ENCODE measurements at regions of chr11 and their contacts with region 1.

Region 1: GRCh38 chr11:4072668-4073285 is 21.8 kb upstream of the RRM1 start:
- DNase-seq: peak; percentile 82
- ATAC-seq: peak; percentile 73
- H3K4me3 ChIP-seq: no peak overlapping the region
- H3K4me3 Mint-ChIP-seq: no peak overlapping the region
- H3K27ac ChIP-seq: peak overlapping the region in 1 of 2 donors; percentile 31
- H3K27ac Mint-ChIP-seq: peak overlapping the region; percentile 5
- H3K4me1 ChIP-seq: peaks cover 4 to 14% of the 10 kb centered on the region in 2 donors
- H3K4me1 Mint-ChIP-seq: peaks cover 20% of the 10 kb centered on the region
- H3K27me3 ChIP-seq: no peaks in the 10 kb centered on the region
- H3K27me3 Mint-ChIP-seq: no peaks in the 10 kb centered on the region
- CTCF ChIP-seq: peak; percentile 95

Region 2: DNA sequence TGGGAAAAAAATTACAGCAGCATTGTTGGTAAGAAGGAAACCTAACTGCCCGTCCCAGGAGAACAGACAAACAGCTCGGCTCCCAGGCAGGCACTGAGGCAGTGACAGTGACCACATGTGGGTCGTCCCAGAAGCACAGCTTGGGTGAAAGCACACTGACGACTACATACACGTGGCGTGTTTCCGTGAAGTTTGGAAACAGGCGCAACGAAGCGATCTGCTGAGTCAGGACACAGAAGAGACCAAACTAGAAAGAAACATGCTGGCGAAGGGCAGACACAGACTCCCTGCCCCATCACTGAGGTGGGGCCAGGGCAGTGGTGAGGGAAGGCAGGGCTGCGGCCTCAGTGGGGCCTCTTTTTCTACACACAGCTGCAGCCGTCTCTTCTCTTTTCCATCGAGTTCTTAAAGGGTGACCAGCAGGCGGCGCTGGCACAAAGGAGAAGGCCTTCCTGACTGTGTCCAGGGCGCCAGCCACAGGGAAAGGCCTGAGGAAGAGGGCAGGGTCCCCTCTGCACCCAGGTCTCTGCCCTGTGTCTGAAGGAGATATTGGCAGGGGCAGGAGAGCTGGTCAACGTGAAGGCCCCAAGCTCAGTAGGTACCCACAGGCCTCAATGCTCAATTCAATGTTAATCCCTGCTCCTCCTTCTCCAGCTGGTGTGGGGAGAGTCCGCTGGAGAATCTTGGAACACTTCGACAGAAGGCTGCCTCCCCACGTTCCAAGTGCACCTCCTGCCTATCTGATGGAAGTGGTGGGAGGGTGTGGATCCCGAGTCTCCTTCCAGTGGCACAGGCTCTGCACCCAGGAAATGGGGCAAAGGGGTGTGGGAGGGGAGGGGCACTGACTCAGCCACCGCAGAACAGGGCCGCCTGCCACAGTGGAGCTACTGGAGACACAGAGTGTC is 1035.5 kb before region 1 on chr11:
- CTCF ChIA-PET with region 1: no interaction called
- POLR2A ChIA-PET with region 1: no interaction called
- intact Hi-C with region 1: no loop called
- DNase-seq: peak; percentile 51
- ATAC-seq: peak; percentile 34
- H3K4me3 ChIP-seq: no peak overlapping the region
- H3K4me3 Mint-ChIP-seq: peak overlapping the region; percentile 9
- H3K27ac ChIP-seq: peak overlapping the region in 1 of 2 donors; percentile 42
- H3K27ac Mint-ChIP-seq: peak overlapping the region; percentile 39
- H3K4me1 ChIP-seq: peaks cover 24 to 30% of the 10 kb centered on the region in 2 donors
- H3K4me1 Mint-ChIP-seq: peaks cover 26% of the 10 kb centered on the region
- H3K27me3 ChIP-seq: no peaks in the 10 kb centered on the region
- H3K27me3 Mint-ChIP-seq: no peaks in the 10 kb centered on the region
- CTCF ChIP-seq: peak; percentile 50

Region 3: DNA sequence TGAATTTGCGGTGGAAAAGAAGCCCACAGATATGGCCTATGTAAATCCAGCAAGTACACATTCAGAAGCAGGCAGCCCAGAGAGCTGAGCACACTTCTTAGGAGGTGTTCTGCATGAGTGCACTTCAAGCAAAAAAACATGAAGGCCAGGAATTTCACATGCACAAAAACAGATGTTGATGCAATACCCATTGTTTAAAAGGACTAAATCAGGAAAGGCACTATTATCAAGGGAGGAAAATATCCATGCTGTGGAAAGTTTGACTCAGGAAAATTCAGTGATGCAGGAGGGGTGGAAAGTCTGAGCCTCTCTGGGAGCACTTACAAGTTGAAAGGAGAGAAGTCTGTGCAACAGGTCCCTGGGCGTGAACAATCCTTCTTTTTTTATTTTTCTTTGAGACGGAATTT is 999.7 kb before region 1 on chr11:
- CTCF ChIA-PET with region 1: no interaction called
- POLR2A ChIA-PET with region 1: no interaction called
- intact Hi-C with region 1: no loop called
- DNase-seq: no peak
- ATAC-seq: no peak
- H3K4me3 ChIP-seq: no peak overlapping the region
- H3K4me3 Mint-ChIP-seq: no peak overlapping the region
- H3K27ac ChIP-seq: no peak overlapping the region
- H3K27ac Mint-ChIP-seq: no peak overlapping the region
- H3K4me1 ChIP-seq: no peaks in the 10 kb centered on the region
- H3K4me1 Mint-ChIP-seq: no peaks in the 10 kb centered on the region
- H3K27me3 ChIP-seq: no peaks in the 10 kb centered on the region
- H3K27me3 Mint-ChIP-seq: peaks cover 11% of the 10 kb centered on the region
- CTCF ChIP-seq: no peak

Region 4: DNA sequence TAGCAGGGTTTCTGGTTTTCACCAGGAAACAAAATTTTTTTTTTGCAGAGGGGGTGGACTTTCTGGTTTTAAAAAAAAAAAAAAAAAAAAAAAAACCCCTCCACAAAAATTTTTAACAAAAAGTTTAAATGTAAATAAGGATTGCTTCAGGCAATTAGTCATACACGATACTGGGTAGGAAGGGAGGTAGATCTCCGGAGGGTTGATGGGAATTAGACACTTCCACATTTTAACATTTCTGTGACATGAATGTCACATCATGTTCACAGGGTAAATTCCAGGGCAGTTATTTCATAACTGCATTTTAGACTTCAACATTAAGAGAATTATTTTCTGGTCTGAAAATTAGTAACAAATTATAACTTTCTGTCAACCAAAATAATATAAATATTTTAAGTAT is 291.4 kb before region 1 on chr11:
- CTCF ChIA-PET with region 1: interaction called, 18 read pairs
- POLR2A ChIA-PET with region 1: no interaction called
- intact Hi-C with region 1: loop called (anchors 10 kb)
- DNase-seq: no peak
- ATAC-seq: no peak
- H3K4me3 ChIP-seq: no peak overlapping the region
- H3K4me3 Mint-ChIP-seq: no peak overlapping the region
- H3K27ac ChIP-seq: peak overlapping the region in 1 of 2 donors; percentile 50
- H3K27ac Mint-ChIP-seq: peak overlapping the region; percentile 32
- H3K4me1 ChIP-seq: peaks cover 16 to 18% of the 10 kb centered on the region in 2 donors
- H3K4me1 Mint-ChIP-seq: peaks cover 36% of the 10 kb centered on the region
- H3K27me3 ChIP-seq: no peaks in the 10 kb centered on the region
- H3K27me3 Mint-ChIP-seq: no peaks in the 10 kb centered on the region
- CTCF ChIP-seq: no peak

Region 5: GRCh38 chr11:3817181-3817800 is 255.5 kb before region 1 on chr11:
- CTCF ChIA-PET with region 1: interaction called, 18 read pairs
- POLR2A ChIA-PET with region 1: no interaction called
- intact Hi-C with region 1: no loop called
- DNase-seq: no peak
- ATAC-seq: no peak
- H3K4me3 ChIP-seq: no peak overlapping the region
- H3K4me3 Mint-ChIP-seq: no peak overlapping the region
- H3K27ac ChIP-seq: no peak overlapping the region
- H3K27ac Mint-ChIP-seq: no peak overlapping the region
- H3K4me1 ChIP-seq: no peaks in the 10 kb centered on the region
- H3K4me1 Mint-ChIP-seq: no peaks in the 10 kb centered on the region
- H3K27me3 ChIP-seq: no peaks in the 10 kb centered on the region
- H3K27me3 Mint-ChIP-seq: no peaks in the 10 kb centered on the region
- CTCF ChIP-seq: no peak

Region 6: DNA sequence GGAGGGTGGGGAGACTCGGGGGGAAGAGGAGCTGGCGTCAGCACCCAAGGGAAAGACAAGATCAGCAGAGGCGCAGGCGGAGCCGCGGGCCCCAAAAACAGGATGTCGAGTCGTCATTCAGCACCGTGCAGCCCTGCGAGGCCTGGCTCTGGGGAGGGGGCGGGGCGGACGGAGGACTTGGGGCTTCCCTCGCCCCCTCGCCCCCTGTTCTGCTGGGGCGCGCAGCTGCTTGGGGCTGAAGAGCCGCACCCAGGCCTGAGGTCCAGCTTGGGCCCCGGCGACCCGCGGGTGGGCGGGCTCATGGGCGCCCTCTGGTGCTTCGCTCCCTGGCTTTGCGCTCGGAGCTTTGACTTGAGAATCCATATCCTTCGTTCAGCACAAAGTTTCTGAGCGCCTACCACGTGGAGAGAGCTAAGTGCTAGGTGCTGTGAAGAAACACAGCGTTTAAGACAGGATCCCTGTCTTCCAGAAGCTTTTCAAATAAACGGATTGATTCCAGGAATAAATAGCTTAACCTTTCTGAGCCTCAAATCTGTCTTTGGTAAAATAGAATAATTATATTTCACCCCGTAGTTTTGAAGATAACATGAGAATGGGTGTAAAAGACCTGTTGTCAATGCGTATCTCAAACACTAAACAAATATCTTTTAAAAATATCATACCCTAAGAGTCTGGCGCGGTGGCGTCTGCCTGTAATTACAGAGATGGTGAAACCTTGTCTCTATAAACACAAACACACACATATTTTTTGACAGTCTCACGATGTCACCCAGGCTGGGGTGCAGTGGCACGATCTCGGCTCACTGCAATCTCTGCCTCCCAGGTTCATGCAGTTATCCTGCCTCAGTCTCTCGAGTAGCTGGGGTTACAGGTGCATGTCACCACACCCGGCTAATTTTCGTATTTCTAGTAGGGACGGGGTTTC is 231.1 kb before region 1 on chr11:
- CTCF ChIA-PET with region 1: interaction called, 819 read pairs
- POLR2A ChIA-PET with region 1: interaction called, 4 read pairs
- intact Hi-C with region 1: loop called (anchors 2 kb)
- DNase-seq: peak; percentile 99
- ATAC-seq: no peak
- H3K4me3 ChIP-seq: peak overlapping the region; percentile 31 to 89 (median 85)
- H3K4me3 Mint-ChIP-seq: peak overlapping the region; percentile 84
- H3K27ac ChIP-seq: peak overlapping the region; percentile 95 to 98
- H3K27ac Mint-ChIP-seq: peak overlapping the region; percentile 98
- H3K4me1 ChIP-seq: peaks cover 39 to 44% of the 10 kb centered on the region in 2 donors
- H3K4me1 Mint-ChIP-seq: peaks cover 48% of the 10 kb centered on the region
- H3K27me3 ChIP-seq: no peaks in the 10 kb centered on the region
- H3K27me3 Mint-ChIP-seq: no peaks in the 10 kb centered on the region
- CTCF ChIP-seq: peak; percentile 81

Region 7: GRCh38 chr11:3873712-3874349 is 198.9 kb before region 1 on chr11:
- CTCF ChIA-PET with region 1: interaction called, 20 read pairs
- POLR2A ChIA-PET with region 1: no interaction called
- intact Hi-C with region 1: no loop called
- DNase-seq: no peak
- ATAC-seq: peak; percentile 70
- H3K4me3 ChIP-seq: no peak overlapping the region
- H3K4me3 Mint-ChIP-seq: peak overlapping the region; percentile 57
- H3K27ac ChIP-seq: peak overlapping the region; percentile 1 to 67
- H3K27ac Mint-ChIP-seq: peak overlapping the region; percentile 83
- H3K4me1 ChIP-seq: peaks cover 63 to 71% of the 10 kb centered on the region in 2 donors
- H3K4me1 Mint-ChIP-seq: peaks cover 84% of the 10 kb centered on the region
- H3K27me3 ChIP-seq: no peaks in the 10 kb centered on the region
- H3K27me3 Mint-ChIP-seq: no peaks in the 10 kb centered on the region
- CTCF ChIP-seq: no peak

Region 8: DNA sequence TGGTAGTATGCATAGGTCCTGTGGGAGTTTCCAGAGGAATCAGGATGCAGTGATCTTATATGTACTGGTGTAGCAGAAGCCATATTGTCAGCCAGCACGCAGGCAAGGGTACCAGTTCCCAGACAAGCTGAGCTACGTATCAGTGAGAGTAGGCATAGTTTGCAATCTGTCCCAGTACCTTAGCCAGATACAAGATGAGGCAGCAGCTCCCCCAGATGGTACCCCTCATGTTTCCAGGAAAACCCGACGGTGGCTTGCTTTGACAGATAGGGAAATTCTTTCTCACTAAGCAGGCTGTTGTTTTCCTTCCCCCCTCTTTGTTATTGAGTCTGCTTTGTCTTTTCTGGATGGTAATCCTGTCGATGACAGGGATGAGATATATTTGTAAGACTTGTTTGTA is 87.9 kb before region 1 on chr11:
- CTCF ChIA-PET with region 1: interaction called, 10 read pairs
- POLR2A ChIA-PET with region 1: no interaction called
- intact Hi-C with region 1: no loop called
- DNase-seq: peak; percentile 58
- ATAC-seq: peak; percentile 69
- H3K4me3 ChIP-seq: no peak overlapping the region
- H3K4me3 Mint-ChIP-seq: no peak overlapping the region
- H3K27ac ChIP-seq: no peak overlapping the region
- H3K27ac Mint-ChIP-seq: peak overlapping the region; percentile 51
- H3K4me1 ChIP-seq: peaks cover 23 to 27% of the 10 kb centered on the region in 2 donors
- H3K4me1 Mint-ChIP-seq: peaks cover 44% of the 10 kb centered on the region
- H3K27me3 ChIP-seq: no peaks in the 10 kb centered on the region
- H3K27me3 Mint-ChIP-seq: no peaks in the 10 kb centered on the region
- CTCF ChIP-seq: peak; percentile 48

Region 9: GRCh38 chr11:4032122-4032521 is 40.7 kb before region 1 on chr11:
- CTCF ChIA-PET with region 1: no interaction called
- POLR2A ChIA-PET with region 1: no interaction called
- intact Hi-C with region 1: no loop called
- DNase-seq: no peak
- ATAC-seq: no peak
- H3K4me3 ChIP-seq: no peak overlapping the region
- H3K4me3 Mint-ChIP-seq: no peak overlapping the region
- H3K27ac ChIP-seq: no peak overlapping the region
- H3K27ac Mint-ChIP-seq: no peak overlapping the region
- H3K4me1 ChIP-seq: no peaks in the 10 kb centered on the region
- H3K4me1 Mint-ChIP-seq: peaks cover 10% of the 10 kb centered on the region
- H3K27me3 ChIP-seq: no peaks in the 10 kb centered on the region
- H3K27me3 Mint-ChIP-seq: no peaks in the 10 kb centered on the region
- CTCF ChIP-seq: no peak

Region 10: DNA sequence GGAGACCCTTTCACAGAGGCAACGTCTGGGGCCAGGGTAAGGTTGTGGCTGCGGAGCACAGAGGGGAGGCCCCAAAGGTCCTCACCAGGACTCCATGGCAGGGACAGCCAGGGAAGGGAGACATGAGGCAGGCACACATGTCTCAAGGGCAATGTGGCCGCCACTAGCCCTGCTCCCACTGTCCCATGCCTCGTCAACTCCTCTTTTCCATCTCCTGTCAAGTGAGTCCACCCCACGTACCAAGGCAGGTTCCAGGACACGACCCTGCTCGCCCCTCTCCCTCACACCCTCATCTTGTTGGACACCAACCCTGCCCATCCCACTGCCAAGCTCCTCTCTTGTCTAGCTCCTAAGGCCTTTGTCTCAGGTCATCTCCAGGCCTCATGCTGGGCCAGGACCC is 95.0 kb after region 1 on chr11:
- CTCF ChIA-PET with region 1: no interaction called
- POLR2A ChIA-PET with region 1: no interaction called
- intact Hi-C with region 1: no loop called
- DNase-seq: no peak
- ATAC-seq: no peak
- H3K4me3 ChIP-seq: no peak overlapping the region
- H3K4me3 Mint-ChIP-seq: no peak overlapping the region
- H3K27ac ChIP-seq: no peak overlapping the region
- H3K27ac Mint-ChIP-seq: no peak overlapping the region
- H3K4me1 ChIP-seq: no peaks in the 10 kb centered on the region
- H3K4me1 Mint-ChIP-seq: no peaks in the 10 kb centered on the region
- H3K27me3 ChIP-seq: no peaks in the 10 kb centered on the region
- H3K27me3 Mint-ChIP-seq: peaks cover 4% of the 10 kb centered on the region
- CTCF ChIP-seq: no peak